IMR-90 (cell line): ENCODE measurements at regions of chrX and their contacts with region 1.

Region 1: DNA sequence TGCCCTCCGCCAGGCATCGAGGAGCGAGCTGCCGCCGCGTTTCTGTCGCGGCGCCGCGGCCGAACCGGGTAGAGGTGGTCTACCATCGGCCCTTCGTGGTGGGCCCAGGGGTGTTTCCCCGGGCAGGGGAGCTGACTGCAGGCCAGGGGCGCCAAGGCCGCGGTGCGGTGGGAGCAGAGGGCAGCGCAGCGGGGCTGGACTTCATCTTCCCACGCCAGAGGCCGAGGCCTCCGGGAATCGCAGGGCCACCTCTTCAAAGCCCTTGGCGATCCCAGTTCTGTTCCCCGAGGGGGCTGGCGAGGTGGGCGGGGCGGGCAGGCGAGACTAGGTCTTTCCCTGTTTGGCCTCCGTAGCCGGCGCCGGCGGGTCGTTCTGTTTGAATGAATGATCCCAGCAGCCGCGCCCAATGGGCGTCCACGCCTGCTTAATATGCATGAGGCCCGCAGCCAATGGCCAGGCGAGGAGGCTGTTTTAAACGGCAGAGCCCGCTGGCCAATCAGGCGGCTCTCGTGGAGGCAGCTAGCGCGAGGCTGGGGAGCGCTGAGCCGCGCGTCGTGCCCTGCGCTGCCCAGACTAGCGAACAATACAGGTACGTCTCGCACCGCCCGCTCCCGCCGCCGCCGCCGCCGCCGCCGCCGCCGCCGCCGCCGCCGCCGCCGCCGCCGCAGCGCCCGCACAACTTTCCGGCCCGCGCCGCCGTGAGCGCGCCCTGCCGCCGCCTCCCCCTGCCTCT is at the start of gene HMGB3:
- DNase-seq: peak; percentile 86
- ATAC-seq: peak; percentile 97
- H3K4me3 ChIP-seq: peak within 1 kb of the TSS; percentile 58
- H3K27ac ChIP-seq: peak within 1 kb of the TSS; percentile 41; the same call in 1 of the 2 replicates
- H3K4me1 ChIP-seq: no peaks in the 10 kb centered on the region
- H3K27me3 ChIP-seq: no peaks in the 10 kb centered on the region
- CTCF ChIP-seq: no peak
- POLR2A ChIP-seq: no peak
- RAD21 ChIP-seq: no peak
- total RNA-seq, gene HMGB3: 14.7 and 23.3 TPM in 2 replicates

Region 2: DNA sequence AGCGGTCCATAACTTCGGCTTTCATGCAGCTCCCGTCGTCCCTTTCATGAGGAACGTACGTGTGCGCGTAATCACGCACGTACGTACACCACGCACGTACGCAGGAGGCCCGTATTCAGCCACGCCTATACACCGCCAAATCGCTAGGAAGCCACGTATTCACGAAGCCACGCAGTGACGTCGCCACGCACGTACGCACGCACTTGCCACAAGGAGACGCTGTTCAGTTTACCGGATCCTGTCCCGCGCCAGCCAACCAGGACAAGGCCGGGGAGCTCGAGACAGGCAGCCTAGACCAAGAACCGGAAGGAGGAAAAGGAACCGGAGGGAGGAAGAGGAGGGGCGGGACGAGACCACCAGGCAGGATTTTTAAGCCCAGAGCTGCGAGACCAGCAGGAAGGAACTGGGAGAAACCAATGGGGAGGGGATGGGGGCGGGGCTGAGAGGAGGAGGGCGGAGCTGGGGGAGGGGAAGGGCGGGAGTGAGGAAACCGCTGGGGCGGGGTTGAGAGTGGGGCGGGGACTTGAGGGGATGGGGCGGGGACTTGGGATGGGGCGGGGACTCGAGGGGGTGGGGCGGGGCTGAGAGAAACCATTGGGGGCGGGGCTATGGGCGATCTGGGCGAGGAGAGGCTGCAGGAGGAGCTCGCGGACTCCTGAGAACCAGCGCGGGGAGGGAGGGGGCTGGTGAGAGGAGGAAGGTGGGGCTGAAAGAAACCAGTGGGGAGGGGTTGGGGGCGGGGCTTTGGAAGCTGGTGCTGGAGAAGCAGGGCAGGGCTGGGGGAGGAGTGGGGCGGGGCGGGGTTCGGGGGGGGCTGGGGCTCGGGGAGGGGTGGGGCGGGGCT is 1044.3 kb before region 1 on chrX and contains the start of gene EOLA2:
- CTCF ChIA-PET with region 1: no interaction called
- POLR2A ChIA-PET with region 1: no interaction called
- dilution Hi-C with region 1: no loop called
- in situ Hi-C with region 1: no loop called
- intact Hi-C with region 1: loop called (anchors 10 kb)
- DNase-seq: peak; percentile 99
- ATAC-seq: peak; percentile 50
- H3K4me3 ChIP-seq: peak within 1 kb of the TSS; percentile 82
- H3K27ac ChIP-seq: peak within 1 kb of the TSS; percentile 95
- H3K4me1 ChIP-seq: no peaks in the 10 kb centered on the region
- H3K27me3 ChIP-seq: no peaks in the 10 kb centered on the region
- CTCF ChIP-seq: peak; percentile 81
- POLR2A ChIP-seq: no peak
- RAD21 ChIP-seq: no peak
- total RNA-seq, gene EOLA2: 22.5 and 23.7 TPM in 2 replicates

Region 3: GRCh38 chrX:150772150-150772970 is 210.6 kb before region 1 on chrX:
- CTCF ChIA-PET with region 1: interaction called, 3 read pairs
- POLR2A ChIA-PET with region 1: no interaction called
- dilution Hi-C with region 1: no loop called
- in situ Hi-C with region 1: loop called (anchors 10 kb)
- intact Hi-C with region 1: loop called (anchors 5 kb)
- DNase-seq: peak; percentile 45
- ATAC-seq: peak; percentile 81
- H3K4me3 ChIP-seq: no peak overlapping the region
- H3K27ac ChIP-seq: no peak overlapping the region
- H3K4me1 ChIP-seq: peaks cover 3% of the 10 kb centered on the region
- H3K27me3 ChIP-seq: no peaks in the 10 kb centered on the region
- CTCF ChIP-seq: peak; percentile 81
- POLR2A ChIP-seq: no peak
- RAD21 ChIP-seq: peak; percentile 91

Region 4: DNA sequence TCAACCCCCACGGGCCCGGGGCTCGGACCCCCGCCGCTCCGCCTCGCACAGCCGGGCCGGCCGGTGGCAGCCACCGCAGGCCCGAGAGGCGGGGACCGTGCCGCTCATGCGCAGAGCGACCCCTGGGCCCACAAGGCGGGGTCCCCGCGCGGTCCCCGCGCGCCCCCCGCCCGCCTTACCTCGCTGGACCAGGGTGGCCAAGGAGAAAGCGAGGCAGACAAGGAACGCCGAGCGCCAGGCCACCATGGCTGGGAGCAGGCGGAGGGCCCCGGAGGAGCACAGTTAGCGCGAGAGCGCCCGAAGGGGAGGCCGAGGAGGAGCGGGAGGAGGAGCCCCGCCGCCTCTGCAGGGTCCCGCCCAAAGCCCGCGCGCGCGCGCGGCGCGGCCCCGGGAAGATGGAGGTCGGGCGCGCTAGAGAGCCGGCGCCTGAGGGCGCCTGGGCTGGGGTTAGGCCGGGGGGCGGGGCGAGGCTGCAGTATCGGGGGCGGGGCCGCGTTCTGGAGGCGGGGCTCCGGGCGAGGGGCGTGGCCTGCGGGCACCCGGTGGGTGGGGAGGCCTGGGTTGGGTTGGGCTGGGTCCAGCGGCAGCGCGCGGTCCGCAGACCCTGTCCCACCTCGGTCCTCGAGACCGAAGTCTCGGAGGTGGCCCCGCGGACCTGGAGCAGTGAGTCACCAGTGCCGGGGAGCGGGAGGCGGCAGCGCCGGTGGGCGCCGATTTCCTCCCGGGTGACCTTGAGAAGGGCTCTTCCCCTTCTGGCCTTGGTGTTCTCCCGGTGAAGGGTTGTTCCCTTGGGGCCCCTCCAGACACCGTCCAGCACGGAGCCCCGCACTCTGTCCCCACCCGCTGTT is 84.4 kb before region 1 on chrX and contains the start of gene CD99L2:
- CTCF ChIA-PET with region 1: no interaction called
- POLR2A ChIA-PET with region 1: no interaction called
- dilution Hi-C with region 1: no loop called
- in situ Hi-C with region 1: loop called (anchors 10 kb)
- intact Hi-C with region 1: loop called (anchors 1 kb)
- DNase-seq: peak; percentile 78
- ATAC-seq: peak; percentile 96
- H3K4me3 ChIP-seq: peak within 1 kb of the TSS; percentile 95
- H3K27ac ChIP-seq: peak within 1 kb of the TSS; percentile 66
- H3K4me1 ChIP-seq: no peaks in the 10 kb centered on the region
- H3K27me3 ChIP-seq: peaks cover under 1% of the 10 kb centered on the region; the same call in 1 of the 2 replicates
- CTCF ChIP-seq: no peak
- POLR2A ChIP-seq: peak; percentile 66; the same call in 1 of the 2 replicates
- RAD21 ChIP-seq: no peak
- total RNA-seq, gene CD99L2: 17.4 and 20.6 TPM in 2 replicates

Region 5: DNA sequence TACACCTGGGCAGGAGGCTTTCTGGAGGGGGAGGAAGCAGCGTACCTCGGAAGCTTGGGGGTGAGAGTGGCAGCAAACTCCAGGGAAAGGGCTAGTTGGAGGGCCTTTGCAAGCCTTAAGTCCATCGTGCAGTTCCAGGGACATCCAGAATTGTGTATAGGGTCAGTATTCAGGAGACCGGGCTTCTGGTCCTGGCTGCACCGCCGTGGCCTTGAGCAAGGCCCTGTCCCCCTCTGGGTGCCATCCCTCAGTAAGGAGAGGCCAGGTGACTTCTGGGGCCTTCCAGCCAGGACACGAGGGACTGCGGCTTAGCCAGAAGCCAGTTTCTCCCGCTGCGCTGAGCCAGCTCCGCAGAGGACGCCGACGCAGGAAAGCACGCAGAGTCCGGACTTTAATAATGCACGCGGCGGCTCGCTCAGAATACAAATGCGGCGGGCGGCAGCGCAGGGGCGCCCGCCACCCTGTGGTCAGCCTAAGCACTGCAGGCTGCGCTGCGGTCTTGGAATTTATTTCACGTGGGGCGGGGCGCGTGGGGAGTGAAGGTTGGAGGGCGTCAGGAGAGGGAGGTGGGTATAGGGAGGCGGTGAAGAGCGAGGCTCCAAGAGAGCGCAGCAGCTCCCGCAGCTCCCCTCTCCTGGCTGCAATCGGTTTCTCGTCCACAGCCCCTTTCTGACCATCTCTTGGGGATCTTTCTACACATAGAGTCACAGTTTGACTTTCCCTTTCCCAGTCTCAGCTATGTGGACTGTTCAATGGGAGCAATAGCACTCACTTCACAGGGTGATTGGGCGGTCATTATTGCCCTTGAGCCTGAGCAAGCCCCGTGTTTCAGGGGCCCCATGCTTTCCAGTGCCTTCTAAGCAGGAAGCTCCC is 99.4 kb after region 1 on chrX:
- CTCF ChIA-PET with region 1: no interaction called
- POLR2A ChIA-PET with region 1: no interaction called
- dilution Hi-C with region 1: no loop called
- in situ Hi-C with region 1: no loop called
- intact Hi-C with region 1: loop called (anchors 1 kb)
- DNase-seq: peak; percentile 22
- ATAC-seq: peak; percentile 99
- H3K4me3 ChIP-seq: no peak overlapping the region
- H3K27ac ChIP-seq: no peak overlapping the region
- H3K4me1 ChIP-seq: no peaks in the 10 kb centered on the region; the same call in 1 of the 2 replicates
- H3K27me3 ChIP-seq: peaks cover 2% of the 10 kb centered on the region
- CTCF ChIP-seq: peak; percentile 85
- POLR2A ChIP-seq: no peak
- RAD21 ChIP-seq: peak; percentile 78